PC-9 (cell line): ENCODE measurements at regions of chr6 and their contacts with region 1.

Region 1: DNA sequence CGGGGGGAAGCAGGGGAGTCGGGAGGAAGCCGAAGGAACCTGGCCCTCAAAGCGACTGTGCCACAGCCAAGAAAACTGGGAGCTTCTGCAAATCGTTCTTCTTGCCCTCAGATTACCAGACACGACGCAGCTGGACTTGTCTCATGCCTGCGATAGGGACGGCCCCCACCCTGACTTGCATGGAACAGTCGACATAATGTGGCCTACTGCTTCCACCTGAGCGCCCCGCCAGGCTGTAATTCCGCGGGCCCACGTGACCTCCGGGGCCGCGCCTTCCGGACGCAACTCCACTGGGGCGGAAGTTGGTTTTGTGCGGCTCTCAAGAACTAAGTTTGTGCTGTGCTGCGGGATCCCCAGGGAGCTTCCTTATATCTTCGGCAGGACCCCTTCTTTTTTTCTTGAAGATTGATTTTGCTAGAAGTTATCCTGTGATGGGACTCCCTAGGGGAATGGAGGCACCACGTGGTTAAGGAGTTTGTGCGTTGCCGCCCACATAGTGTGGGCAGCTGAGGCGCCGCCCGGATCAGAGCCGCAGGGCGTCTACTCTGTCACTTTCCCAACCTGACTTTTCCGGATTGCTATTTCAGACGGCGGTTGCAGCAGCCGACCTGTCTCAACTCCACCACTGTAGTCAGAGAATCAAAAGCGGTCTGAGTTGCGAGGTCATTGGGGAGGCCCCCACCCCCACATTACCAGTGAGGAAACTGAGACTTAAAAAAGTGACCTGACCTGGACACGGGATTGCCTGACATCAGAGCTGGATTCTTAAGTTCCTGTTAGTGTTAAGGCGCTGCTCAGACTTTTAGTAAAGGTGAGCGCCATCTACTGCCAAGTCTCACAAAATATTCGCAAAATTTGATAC is 540 bp upstream of the CD164 start:
- DNase-seq: peak; percentile 88 to 89
- H3K4me3 ChIP-seq: peak overlapping the region; percentile 77
- H3K27ac ChIP-seq: peak overlapping the region; percentile 93
- H3K4me1 ChIP-seq: peaks cover 43% of the 10 kb centered on the region
- H3K27me3 ChIP-seq: no peaks in the 10 kb centered on the region
- CTCF ChIP-seq: peak; percentile 82

Region 2: DNA sequence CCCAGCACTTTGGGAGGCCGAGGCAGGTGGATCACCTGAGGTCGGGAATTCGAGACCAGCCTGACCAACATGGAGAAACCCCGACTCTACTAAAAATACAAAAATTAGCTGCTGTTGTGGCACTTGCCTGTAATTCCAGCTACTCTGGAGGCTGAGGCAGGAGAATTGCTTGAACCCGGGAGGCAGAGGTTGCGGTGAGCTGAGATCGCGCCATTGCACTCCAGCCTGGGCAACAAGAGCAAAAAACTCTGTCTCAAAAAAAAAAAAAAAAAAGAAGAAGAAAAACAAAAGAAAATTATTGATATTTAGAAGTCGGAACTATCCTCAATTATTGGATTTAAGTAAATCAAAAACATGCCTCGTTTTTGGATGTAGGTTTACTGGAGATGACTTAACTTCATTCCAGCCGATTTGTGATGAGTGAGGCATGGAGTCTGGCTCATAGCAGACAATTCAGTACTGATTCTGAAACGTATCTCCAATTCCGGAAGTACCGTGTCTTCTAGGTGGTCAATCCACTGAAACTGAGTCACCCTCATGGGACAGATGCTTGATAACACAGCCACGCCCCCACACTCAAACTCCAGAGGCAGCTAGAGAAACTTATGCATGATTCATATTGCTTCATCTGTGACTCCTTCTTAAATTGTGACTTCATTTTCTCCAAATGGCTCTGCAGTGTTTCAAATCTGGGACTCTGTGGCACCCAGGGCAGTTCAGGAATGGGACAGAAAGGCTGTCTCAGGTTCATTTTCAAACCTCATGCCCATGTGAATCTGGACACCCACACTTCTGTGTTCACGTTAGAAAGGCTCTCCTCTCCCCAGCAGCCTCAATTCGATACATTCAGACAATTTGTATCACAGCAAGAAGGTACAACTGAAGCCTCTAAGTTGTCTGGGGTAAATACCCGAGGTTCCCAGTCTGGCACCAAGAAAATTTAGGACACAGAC is 644.9 kb before region 1 on chr6:
- CTCF ChIA-PET with region 1: no interaction called
- POLR2A ChIA-PET with region 1: interaction called, 10 read pairs
- intact Hi-C with region 1: no loop called
- DNase-seq: peak; percentile 84 to 99
- H3K4me3 ChIP-seq: peak overlapping the region; percentile 59
- H3K27ac ChIP-seq: peak overlapping the region; percentile 99
- H3K4me1 ChIP-seq: peaks cover 93% of the 10 kb centered on the region
- H3K27me3 ChIP-seq: no peaks in the 10 kb centered on the region
- CTCF ChIP-seq: no peak

Region 3: GRCh38 chr6:109187399-109188114 is 195.2 kb before region 1 on chr6:
- CTCF ChIA-PET with region 1: interaction called, 17 read pairs
- POLR2A ChIA-PET with region 1: no interaction called
- intact Hi-C with region 1: loop called (anchors 1 kb)
- DNase-seq: peak; percentile 52 to 60
- H3K4me3 ChIP-seq: no peak overlapping the region
- H3K27ac ChIP-seq: no peak overlapping the region
- H3K4me1 ChIP-seq: no peaks in the 10 kb centered on the region
- H3K27me3 ChIP-seq: no peaks in the 10 kb centered on the region
- CTCF ChIP-seq: peak; percentile 98

Region 4: GRCh38 chr6:109322825-109323224 is 60.0 kb before region 1 on chr6:
- CTCF ChIA-PET with region 1: no interaction called
- POLR2A ChIA-PET with region 1: no interaction called
- intact Hi-C with region 1: no loop called
- DNase-seq: no peak
- H3K4me3 ChIP-seq: no peak overlapping the region
- H3K27ac ChIP-seq: no peak overlapping the region
- H3K4me1 ChIP-seq: no peaks in the 10 kb centered on the region
- H3K27me3 ChIP-seq: no peaks in the 10 kb centered on the region
- CTCF ChIP-seq: no peak

Region 5: GRCh38 chr6:109424946-109425345 is 42.1 kb after region 1 on chr6:
- CTCF ChIA-PET with region 1: no interaction called
- POLR2A ChIA-PET with region 1: interaction called, 7 read pairs
- intact Hi-C with region 1: loop called (anchors 1 kb)
- DNase-seq: no peak
- H3K4me3 ChIP-seq: 0 out of 2 replicates have a peak overlapping the region, but pooled peaks have one; percentile 4
- H3K27ac ChIP-seq: peak overlapping the region; percentile 76
- H3K4me1 ChIP-seq: peaks cover 43% of the 10 kb centered on the region
- H3K27me3 ChIP-seq: no peaks in the 10 kb centered on the region
- CTCF ChIP-seq: no peak

Region 6: GRCh38 chr6:109455502-109456282 is 72.9 kb after region 1 on chr6 and contains the start of gene MICAL1:
- CTCF ChIA-PET with region 1: no interaction called
- POLR2A ChIA-PET with region 1: no interaction called
- intact Hi-C with region 1: loop called (anchors 1 kb)
- DNase-seq: peak; percentile 45 to 67
- H3K4me3 ChIP-seq: peak within 1 kb of the TSS; percentile 77
- H3K27ac ChIP-seq: no peak within 1 kb of the TSS
- H3K4me1 ChIP-seq: no peaks in the 10 kb centered on the region; the same call in 1 of the 2 replicates
- H3K27me3 ChIP-seq: no peaks in the 10 kb centered on the region
- CTCF ChIP-seq: no peak
- total RNA-seq, gene MICAL1: 10.8 and 17.7 TPM in 2 replicates

Region 7: GRCh38 chr6:109690737-109691621 is 308.2 kb after region 1 on chr6 and contains the starts of genes AK9 and FIG4:
- CTCF ChIA-PET with region 1: no interaction called
- POLR2A ChIA-PET with region 1: no interaction called
- intact Hi-C with region 1: loop called (anchors 2 kb)
- DNase-seq: peak; percentile 94
- H3K4me3 ChIP-seq: peak within 1 kb of the TSS; percentile 92
- H3K27ac ChIP-seq: peak within 1 kb of the TSS; percentile 74
- H3K4me1 ChIP-seq: peaks cover 39% of the 10 kb centered on the region
- H3K27me3 ChIP-seq: no peaks in the 10 kb centered on the region
- CTCF ChIP-seq: no peak; the same call in 1 of the 2 replicates
- total RNA-seq, gene AK9: 6.4 and 7.4 TPM in 2 replicates
- total RNA-seq, gene FIG4: 15.4 and 16.5 TPM in 2 replicates

Region 8: DNA sequence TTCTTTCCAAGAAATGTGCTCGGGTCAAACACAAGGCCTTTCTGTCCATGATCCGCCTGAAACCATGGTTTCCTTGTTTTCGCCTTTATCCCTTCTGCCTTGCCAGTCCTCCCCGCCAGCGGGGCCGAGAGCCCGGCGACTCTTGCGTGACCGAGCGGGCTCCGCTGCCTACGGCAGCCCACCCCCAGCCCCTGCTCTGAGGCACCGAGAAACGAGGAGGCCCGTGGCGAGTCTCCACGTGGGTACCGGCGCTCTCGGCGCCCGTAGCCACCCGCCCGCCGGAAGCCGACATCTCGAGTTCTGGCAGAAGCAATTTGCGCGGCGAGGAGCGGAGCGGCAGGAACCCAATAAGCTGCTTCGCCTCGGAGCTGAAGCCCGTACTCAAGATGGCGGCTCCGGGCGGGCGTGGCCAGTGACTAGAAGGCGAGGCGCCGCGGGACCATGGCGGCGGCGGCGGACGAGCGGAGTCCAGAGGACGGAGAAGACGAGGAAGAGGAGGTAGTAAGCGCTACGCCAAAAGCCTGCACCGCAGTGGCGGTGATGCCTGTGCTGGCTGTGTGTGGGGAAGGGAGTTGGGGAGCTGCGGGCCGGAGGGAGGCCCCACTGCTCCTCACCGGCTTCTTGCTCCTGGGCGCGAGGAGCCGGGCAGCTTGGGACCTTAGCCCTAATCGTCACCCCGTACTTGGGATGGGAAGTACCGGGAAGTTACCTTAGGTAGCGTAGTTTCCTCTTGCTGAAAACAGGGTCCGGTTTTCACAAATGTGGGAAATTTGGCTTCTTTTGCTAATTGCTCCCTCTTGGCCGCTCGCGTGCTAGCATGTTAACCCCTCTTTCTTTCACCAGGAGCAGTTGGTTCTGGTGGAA is 1575.8 kb after region 1 on chr6 and contains the start of gene GTF3C6:
- CTCF ChIA-PET with region 1: no interaction called
- POLR2A ChIA-PET with region 1: interaction called, 11 read pairs
- intact Hi-C with region 1: no loop called
- DNase-seq: peak; percentile 77
- H3K4me3 ChIP-seq: peak within 1 kb of the TSS; percentile 79
- H3K27ac ChIP-seq: peak within 1 kb of the TSS; percentile 84
- H3K4me1 ChIP-seq: peaks cover 5% of the 10 kb centered on the region
- H3K27me3 ChIP-seq: no peaks in the 10 kb centered on the region
- CTCF ChIP-seq: no peak
- total RNA-seq, gene GTF3C6: 27.9 and 28.5 TPM in 2 replicates